ENCODE measurements at regions of chr6 and their contacts with region 1.

Region 1: GRCh38 chr6:49225471-49225870 is 237.6 kb downstream of the MMUT start:
- DNase-seq: no peak
- ATAC-seq: no peak
- H3K4me3 ChIP-seq: no peak overlapping the region
- H3K4me3 Mint-ChIP-seq: no peak overlapping the region
- H3K27ac ChIP-seq: no peak overlapping the region
- H3K27ac Mint-ChIP-seq: no peak overlapping the region
- H3K4me1 ChIP-seq: no peaks in the 10 kb centered on the region
- H3K4me1 Mint-ChIP-seq: no peaks in the 10 kb centered on the region
- H3K27me3 ChIP-seq: no peaks in the 10 kb centered on the region
- H3K27me3 Mint-ChIP-seq: no peaks in the 10 kb centered on the region
- CTCF ChIP-seq: no peak

Region 2: DNA sequence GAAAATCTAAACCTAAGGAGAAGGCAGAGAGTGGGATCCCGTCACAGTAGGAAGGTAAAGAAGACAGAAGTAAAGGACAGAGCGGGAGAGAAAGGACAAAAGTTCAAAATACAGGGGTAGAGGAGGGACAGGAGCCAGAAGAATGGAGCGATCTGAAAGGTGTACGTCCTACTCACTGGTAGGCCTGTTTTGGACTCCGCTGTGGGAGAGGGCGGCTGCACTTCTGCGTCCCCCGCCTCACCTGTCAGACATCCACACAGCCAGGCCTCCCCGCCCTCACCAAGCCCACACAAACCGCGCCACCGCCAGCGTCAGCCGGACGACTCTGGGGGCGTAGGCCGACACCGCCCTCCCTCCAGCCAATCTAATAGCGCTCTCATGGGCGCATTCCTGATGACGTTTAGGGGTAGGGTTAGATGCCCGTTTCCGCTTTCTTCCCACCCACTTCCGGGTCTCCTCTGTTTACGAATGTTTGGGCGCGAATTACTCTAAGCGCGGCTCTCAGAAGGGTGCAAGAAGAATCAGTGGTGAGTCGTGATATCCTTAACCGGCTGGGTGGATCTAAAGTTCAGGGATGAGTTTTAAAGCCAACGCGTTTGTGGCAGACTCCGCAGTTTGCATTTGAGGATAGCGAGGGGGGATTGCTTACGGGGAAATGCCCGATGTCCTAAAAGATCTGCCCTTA is 237.6 kb after region 1 on chr6 and contains the starts of genes CENPQ and MMUT:
- CTCF ChIA-PET with region 1: no interaction called
- POLR2A ChIA-PET with region 1: no interaction called
- intact Hi-C with region 1: loop called in 1 of 2 experiments (anchors 5 kb)
- DNase-seq: peak; percentile 80 to 96 (median 88)
- ATAC-seq: peak; percentile 97
- H3K4me3 ChIP-seq: peak within 1 kb of the TSS; percentile 77 to 81
- H3K4me3 Mint-ChIP-seq: peak within 1 kb of the TSS; percentile 92
- H3K27ac ChIP-seq: peak within 1 kb of the TSS; percentile 79 to 84
- H3K27ac Mint-ChIP-seq: peak within 1 kb of the TSS; percentile 99
- H3K4me1 ChIP-seq: peaks cover 26% of the 10 kb centered on the region
- H3K4me1 Mint-ChIP-seq: peaks cover 58% of the 10 kb centered on the region
- H3K27me3 ChIP-seq: no peaks in the 10 kb centered on the region
- H3K27me3 Mint-ChIP-seq: no peaks in the 10 kb centered on the region
- CTCF ChIP-seq: no peak
- total RNA-seq, gene CENPQ: 0.35 to 0.58 TPM
- total RNA-seq, gene MMUT: 5.8 to 6.2 TPM

Region 3: GRCh38 chr6:49490632-49491031 is 265.2 kb after region 1 on chr6:
- CTCF ChIA-PET with region 1: no interaction called
- POLR2A ChIA-PET with region 1: no interaction called
- intact Hi-C with region 1: no loop called
- DNase-seq: no peak
- ATAC-seq: no peak
- H3K4me3 ChIP-seq: no peak overlapping the region
- H3K4me3 Mint-ChIP-seq: no peak overlapping the region
- H3K27ac ChIP-seq: no peak overlapping the region
- H3K27ac Mint-ChIP-seq: no peak overlapping the region
- H3K4me1 ChIP-seq: no peaks in the 10 kb centered on the region
- H3K4me1 Mint-ChIP-seq: no peaks in the 10 kb centered on the region
- H3K27me3 ChIP-seq: no peaks in the 10 kb centered on the region
- H3K27me3 Mint-ChIP-seq: no peaks in the 10 kb centered on the region
- CTCF ChIP-seq: no peak